Activated T-helper 2 cell treated with anti-CD3 and anti-CD28 coated beads, Interferon-gamma antibody, Interleukin-2, Interleukin-4, amounts not matched to agents 10 μg/mL and 5 μg/mL and 100 μg/mL, durations not matched to agents 14 hours and 24 hours and 36 hours (primary cell): ENCODE measurements at regions of chr2 and their contacts with region 1.

Region 1: GRCh38 chr2:146108993-146109392 is 1589.1 kb upstream of the ZEB2 start:
- DNase-seq: no peak
- H3K4me3 Mint-ChIP-seq: no peak overlapping the region
- H3K27ac Mint-ChIP-seq: no peak overlapping the region
- H3K4me1 Mint-ChIP-seq: no peaks in the 10 kb centered on the region
- H3K27me3 Mint-ChIP-seq: no peaks in the 10 kb centered on the region

Region 2: DNA sequence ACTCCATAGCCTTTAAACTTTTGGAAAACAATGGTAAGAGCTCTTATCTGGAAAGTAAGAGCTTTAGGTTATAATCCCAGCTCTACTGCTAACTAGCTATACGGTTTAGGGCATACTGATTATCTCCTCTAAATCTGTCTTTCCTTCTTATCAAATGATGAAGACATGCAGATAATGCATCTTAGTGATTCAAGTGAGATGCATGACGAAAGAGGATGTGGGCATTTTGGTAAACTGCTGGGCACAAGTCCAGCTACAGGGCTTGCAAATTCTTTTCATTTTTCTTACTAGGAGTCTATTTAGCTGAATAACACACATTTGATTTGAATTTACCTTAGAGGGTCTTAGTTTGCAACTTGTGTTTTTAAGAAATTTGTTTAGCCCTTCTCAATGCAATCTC is 15.7 kb after region 1 on chr2:
- intact Hi-C with region 1: loop called (anchors 1 kb)
- DNase-seq: no peak
- H3K4me3 Mint-ChIP-seq: no peak overlapping the region
- H3K27ac Mint-ChIP-seq: no peak overlapping the region
- H3K4me1 Mint-ChIP-seq: no peaks in the 10 kb centered on the region
- H3K27me3 Mint-ChIP-seq: no peaks in the 10 kb centered on the region